Heart right ventricle (tissue), 16 donors: ENCODE measurements at regions of chr7 and their contacts with region 1.

Region 1: GRCh38 chr7:22822486-22823141 is at the start of gene TOMM7:
- DNase-seq: peak; percentile 90 to 91
- ATAC-seq: peak; percentile 95 to 98 (median 98)
- H3K4me3 ChIP-seq: peak within 1 kb of the TSS; percentile 51 to 93 (median 80)
- H3K27ac ChIP-seq: peak within 1 kb of the TSS in 9 of 10 donors; percentile 71 to 94 (median 85)
- H3K4me1 ChIP-seq: peaks cover 0 to 39% (median 27%) of the 10 kb centered on the region in 9 donors
- H3K27me3 ChIP-seq: peaks cover 0 to 9% (median 0%) of the 10 kb centered on the region in 7 donors
- CTCF ChIP-seq: peak in 8 of 9 donors; percentile 32 to 70 (median 63)
- total RNA-seq, gene TOMM7: 454 to 532 (median 524) TPM

Region 2: DNA sequence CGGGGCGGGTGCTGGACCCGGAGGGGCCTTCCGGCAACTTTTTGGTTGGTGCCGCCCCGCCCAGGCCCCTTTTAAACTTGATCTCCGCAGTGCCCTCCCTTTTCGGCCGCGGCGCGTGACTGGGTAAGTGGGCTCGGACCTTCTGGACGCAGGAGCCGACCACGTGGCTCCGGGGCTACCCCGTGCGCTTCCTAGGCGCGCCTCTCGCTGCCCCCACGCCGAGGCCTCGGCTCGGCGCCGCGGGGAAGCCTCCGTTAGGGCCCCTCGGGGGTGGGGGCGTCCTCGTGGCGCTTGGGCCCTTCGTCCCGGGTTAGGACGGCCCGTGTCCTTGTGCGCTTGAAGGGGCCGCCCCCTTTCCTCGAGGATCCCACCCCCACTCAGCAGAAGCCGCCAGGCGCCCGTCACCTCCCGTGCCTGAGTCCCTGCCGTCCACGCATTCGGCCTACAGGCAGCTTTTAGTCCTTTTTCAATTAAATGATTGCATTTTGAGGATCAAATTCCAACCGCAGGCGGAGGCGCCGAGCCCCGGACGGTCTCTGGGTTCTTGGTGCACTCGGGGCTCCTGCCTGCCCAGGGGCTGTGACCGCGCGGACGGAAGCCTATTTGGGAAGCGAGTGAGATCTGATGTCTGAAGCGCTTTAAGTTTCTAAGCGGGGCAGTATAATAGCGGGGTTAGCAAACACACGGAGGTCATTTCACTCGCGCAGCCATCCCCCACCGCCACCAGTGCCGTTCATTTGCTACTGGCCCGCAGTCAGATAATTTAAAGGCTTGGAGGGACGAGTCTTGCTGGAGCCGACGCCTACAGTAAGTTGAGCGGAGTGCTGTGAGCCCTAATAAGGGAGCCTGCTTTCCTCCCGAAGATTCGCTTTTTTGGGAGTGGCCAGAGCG is 31.8 kb after region 1 on chr7:
- intact Hi-C with region 1: loop called in 2 of 10 experiments (anchors 2 to 5 kb)
- DNase-seq: peak; percentile 88 to 89
- ATAC-seq: peak; percentile 84 to 97 (median 88)
- H3K4me3 ChIP-seq: peak overlapping the region; percentile 61 to 87 (median 74)
- H3K27ac ChIP-seq: peak overlapping the region; percentile 90 to 99 (median 95)
- H3K4me1 ChIP-seq: peaks cover 0 to 45% (median 36%) of the 10 kb centered on the region in 9 donors
- H3K27me3 ChIP-seq: no peaks in the 10 kb centered on the region
- CTCF ChIP-seq: peak in 8 of 9 donors; percentile 5 to 97 (median 94)

Region 3: GRCh38 chr7:23013715-23014649 is 191.4 kb after region 1 on chr7 and contains the start of gene HYCC1:
- intact Hi-C with region 1: loop called in 3 of 10 experiments (anchors 5 to 10 kb)
- DNase-seq: peak; percentile 98 to 99
- ATAC-seq: peak; percentile 99 to 100 (median 100)
- H3K4me3 ChIP-seq: peak within 1 kb of the TSS; percentile 60 to 96 (median 84)
- H3K27ac ChIP-seq: peak within 1 kb of the TSS; percentile 19 to 93 (median 86)
- H3K4me1 ChIP-seq: peaks cover 0 to 57% (median 38%) of the 10 kb centered on the region in 9 donors
- H3K27me3 ChIP-seq: no peaks in the 10 kb centered on the region
- CTCF ChIP-seq: peak; percentile 38 to 75 (median 67)
- total RNA-seq, gene HYCC1: 26.2 to 39.6 (median 34.5) TPM

Region 4: GRCh38 chr7:23020742-23021401 is 198.3 kb after region 1 on chr7:
- intact Hi-C with region 1: loop called in 2 of 10 experiments (anchors 5 to 10 kb)
- DNase-seq: peak in 1 of 2 donors; percentile 15
- ATAC-seq: peak; percentile 56 to 91 (median 77)
- H3K4me3 ChIP-seq: no peak overlapping the region
- H3K27ac ChIP-seq: peak overlapping the region in 3 of 10 donors; percentile 37 to 59 (median 54)
- H3K4me1 ChIP-seq: peaks cover 0 to 42% (median 6%) of the 10 kb centered on the region in 9 donors
- H3K27me3 ChIP-seq: no peaks in the 10 kb centered on the region
- CTCF ChIP-seq: no peak

Region 5: DNA sequence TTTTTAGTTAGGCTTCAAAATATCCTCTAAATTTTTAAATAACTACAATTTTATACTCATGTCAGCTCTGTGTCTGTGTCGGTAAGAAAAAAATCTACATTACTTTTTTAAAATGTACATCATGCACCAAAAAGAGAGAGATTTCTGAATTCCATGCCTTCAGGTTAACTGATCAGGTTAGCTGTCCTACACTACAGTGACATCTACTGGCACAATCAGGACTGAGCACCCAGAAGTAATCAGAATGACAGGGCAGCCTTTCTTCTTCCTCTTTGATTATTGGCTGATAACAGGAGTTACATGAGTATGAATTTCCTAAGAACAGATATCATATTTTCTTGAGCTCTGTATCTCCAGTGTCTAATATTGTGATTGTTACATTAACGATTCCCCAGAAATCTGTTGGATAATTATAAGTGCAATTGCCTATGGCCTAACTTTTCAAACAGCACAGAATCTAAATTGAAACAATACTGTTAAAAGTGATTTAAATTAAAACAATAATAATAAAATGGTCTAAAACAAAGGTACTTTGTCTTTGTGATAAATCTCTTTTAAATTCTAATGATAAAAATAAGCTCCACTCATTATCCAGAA is 233.1 kb after region 1 on chr7:
- intact Hi-C with region 1: loop called in 4 of 10 experiments (anchors 5 to 10 kb)
- DNase-seq: peak in 1 of 2 donors; percentile 48
- ATAC-seq: peak in 7 of 8 donors; percentile 51 to 84 (median 64)
- H3K4me3 ChIP-seq: no peak overlapping the region
- H3K27ac ChIP-seq: no peak overlapping the region
- H3K4me1 ChIP-seq: peaks cover 0 to 9% (median 0%) of the 10 kb centered on the region in 9 donors
- H3K27me3 ChIP-seq: no peaks in the 10 kb centered on the region
- CTCF ChIP-seq: peak; percentile 81 to 97 (median 94)

Region 6: GRCh38 chr7:23181684-23182553 is 359.3 kb after region 1 on chr7 and contains the start of gene NUP42:
- intact Hi-C with region 1: loop called in 1 of 10 experiments (anchors 5 kb)
- DNase-seq: peak; percentile 92 to 96
- ATAC-seq: peak; percentile 94 to 99 (median 97)
- H3K4me3 ChIP-seq: peak within 1 kb of the TSS; percentile 56 to 87 (median 76)
- H3K27ac ChIP-seq: peak within 1 kb of the TSS; percentile 59 to 94 (median 91)
- H3K4me1 ChIP-seq: peaks cover 0 to 49% (median 31%) of the 10 kb centered on the region in 9 donors
- H3K27me3 ChIP-seq: no peaks in the 10 kb centered on the region
- CTCF ChIP-seq: no peak
- total RNA-seq, gene NUP42: 14.7 to 25.1 (median 19.7) TPM